Activated CD4-positive, alpha-beta T cell treated with anti-CD3 and anti-CD28 coated beads for 36 hours (primary cell): ENCODE measurements at regions of chr13 and their contacts with region 1.

Region 1: DNA sequence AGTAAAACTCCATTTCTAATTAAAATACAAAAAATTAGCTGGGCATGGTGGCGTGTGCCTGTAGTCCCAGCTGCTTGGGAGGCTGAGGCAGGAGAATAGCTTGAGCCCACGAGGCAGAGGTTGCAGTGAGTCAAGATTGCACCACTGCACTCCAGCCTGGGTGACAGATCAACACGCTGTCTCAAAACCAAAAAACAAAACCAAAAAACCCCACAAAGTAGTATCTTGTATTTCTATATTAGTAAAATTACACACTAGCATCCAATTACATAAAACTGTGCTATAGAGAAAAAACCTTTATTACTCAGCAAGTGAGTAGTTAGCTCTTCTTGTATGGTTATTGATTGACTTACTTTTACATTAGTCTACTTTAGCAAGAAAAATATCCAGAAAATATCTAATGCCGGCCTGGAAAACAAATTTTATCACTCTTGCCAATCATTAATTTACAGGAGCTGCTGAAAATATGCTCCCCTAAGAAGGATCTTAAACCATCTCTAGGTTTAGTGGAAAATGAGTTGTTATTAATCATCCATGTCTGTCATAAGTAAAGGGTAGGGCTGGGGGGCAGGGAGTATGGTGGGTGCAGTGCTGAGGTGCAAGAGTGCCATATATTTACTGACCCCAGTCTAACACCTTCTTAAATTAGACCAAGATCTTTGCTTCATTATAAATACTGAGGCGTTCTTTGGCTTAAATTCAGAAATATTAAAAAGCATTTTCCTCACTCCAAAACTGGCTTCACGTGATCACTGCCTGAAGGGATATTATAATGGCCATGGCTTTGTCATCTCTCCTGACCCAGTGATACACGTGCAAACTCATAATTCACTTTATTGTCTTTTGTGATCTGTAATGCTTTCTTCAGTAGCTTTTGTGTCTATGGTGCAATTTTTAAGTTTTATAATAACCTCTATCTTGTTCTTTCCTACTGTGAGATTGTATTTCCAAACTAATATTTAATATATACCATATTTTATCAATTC is 44.1 kb downstream of the UBL3 start:
- DNase-seq: peak; percentile 61
- ATAC-seq: peak; percentile 90
- H3K4me3 Mint-ChIP-seq: no peak overlapping the region
- H3K27ac Mint-ChIP-seq: no peak overlapping the region
- H3K4me1 Mint-ChIP-seq: peaks cover 37% of the 10 kb centered on the region
- H3K27me3 Mint-ChIP-seq: no peaks in the 10 kb centered on the region

Region 2: GRCh38 chr13:29782798-29783197 is 23.5 kb before region 1 on chr13:
- CTCF ChIA-PET with region 1: interaction called, 3 read pairs
- POLR2A ChIA-PET with region 1: no interaction called
- intact Hi-C with region 1: loop called in 1 of 2 experiments (anchors 2 kb)
- DNase-seq: peak; percentile 36
- ATAC-seq: peak; percentile 98
- H3K4me3 Mint-ChIP-seq: no peak overlapping the region
- H3K27ac Mint-ChIP-seq: peak overlapping the region; percentile 53
- H3K4me1 Mint-ChIP-seq: peaks cover 32% of the 10 kb centered on the region
- H3K27me3 Mint-ChIP-seq: no peaks in the 10 kb centered on the region

Region 3: DNA sequence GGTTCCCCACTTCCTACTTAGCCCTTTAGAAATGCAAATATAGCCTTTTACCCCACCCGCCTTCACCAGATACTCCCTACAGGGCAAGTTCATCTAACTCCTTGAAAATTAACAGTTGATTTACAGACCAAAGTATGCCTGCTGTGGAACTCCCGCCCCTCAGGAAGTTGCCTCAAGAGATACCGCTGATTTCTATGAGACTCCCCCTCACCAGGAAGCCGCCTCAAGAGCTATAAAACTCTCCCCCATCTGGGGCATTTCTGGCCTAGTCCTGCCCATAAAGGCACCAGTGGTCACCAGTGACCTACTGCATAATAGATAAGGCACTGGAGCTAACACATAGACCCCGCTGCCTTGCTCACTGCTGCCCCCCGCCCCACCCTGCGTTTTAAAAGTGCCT is 245.8 kb after region 1 on chr13:
- CTCF ChIA-PET with region 1: no interaction called
- POLR2A ChIA-PET with region 1: no interaction called
- intact Hi-C with region 1: no loop called
- DNase-seq: peak; percentile 8
- ATAC-seq: no peak
- H3K4me3 Mint-ChIP-seq: no peak overlapping the region
- H3K27ac Mint-ChIP-seq: peak overlapping the region; percentile 52
- H3K4me1 Mint-ChIP-seq: peaks cover 16% of the 10 kb centered on the region
- H3K27me3 Mint-ChIP-seq: no peaks in the 10 kb centered on the region